Calu3 (cell line): ENCODE measurements at regions of chr17 and their contacts with region 1.

Region 1: GRCh38 chr17:40615295-40615988 is 32.2 kb downstream of the SMARCE1 start:
- DNase-seq: peak; percentile 100
- H3K4me3 Mint-ChIP-seq: no peak overlapping the region
- H3K27ac Mint-ChIP-seq: no peak overlapping the region
- H3K4me1 Mint-ChIP-seq: peaks cover 26% of the 10 kb centered on the region
- H3K27me3 Mint-ChIP-seq: peaks cover 97% of the 10 kb centered on the region
- CTCF ChIP-seq: no peak

Region 2: GRCh38 chr17:40499551-40500174 is 115.8 kb before region 1 on chr17:
- CTCF ChIA-PET with region 1: interaction called, 11 read pairs
- intact Hi-C with region 1: no loop called
- DNase-seq: peak; percentile 100
- H3K4me3 Mint-ChIP-seq: peak overlapping the region; percentile 33
- H3K27ac Mint-ChIP-seq: no peak overlapping the region
- H3K4me1 Mint-ChIP-seq: peaks cover 20% of the 10 kb centered on the region
- H3K27me3 Mint-ChIP-seq: peaks cover 82% of the 10 kb centered on the region
- CTCF ChIP-seq: no peak

Region 3: DNA sequence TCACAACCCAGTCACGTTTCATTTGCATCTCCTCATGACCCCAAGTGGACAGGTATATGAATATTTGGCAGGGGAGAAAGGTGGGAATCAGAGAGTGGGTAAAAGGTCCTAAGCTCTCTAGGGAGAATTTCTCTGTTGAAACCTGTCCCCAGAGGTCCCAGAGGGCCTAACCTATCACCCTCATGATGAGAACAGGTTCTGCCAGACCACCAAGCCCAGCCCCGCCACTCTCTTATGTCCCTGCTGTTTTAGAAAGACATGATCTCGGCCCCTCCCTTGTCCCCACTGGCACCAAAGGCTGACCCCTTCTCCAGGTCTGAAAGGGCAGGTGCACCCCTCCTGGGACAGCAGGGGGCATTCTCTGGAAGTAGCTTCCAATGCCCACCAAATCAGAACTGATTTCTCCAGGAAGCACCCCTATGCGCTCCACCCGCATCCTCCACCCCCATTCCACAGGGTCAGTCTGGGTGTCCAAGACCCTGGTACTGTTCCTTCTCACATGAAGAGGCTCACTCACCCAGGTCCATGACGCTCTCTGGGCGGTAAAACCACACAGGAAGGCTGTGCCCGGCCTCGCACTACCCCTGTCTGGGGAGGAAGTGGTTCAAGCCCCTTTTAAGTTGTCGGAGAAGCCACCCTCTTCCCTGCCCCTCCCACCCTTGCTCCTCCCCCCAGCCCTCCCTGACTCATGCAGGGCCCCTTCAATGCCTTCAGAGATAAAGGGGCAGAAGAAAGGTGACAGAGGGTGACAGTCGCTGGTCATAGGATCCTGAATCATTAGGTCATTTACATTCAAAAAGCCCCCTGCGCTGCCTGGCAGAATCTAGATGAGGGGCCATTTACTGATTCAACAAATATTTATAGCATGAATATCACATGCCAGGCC is 50.3 kb before region 1 on chr17 and contains the start of gene CCR7:
- CTCF ChIA-PET with region 1: interaction called, 50 read pairs
- intact Hi-C with region 1: loop called (anchors 2 kb)
- DNase-seq: peak; percentile 43
- H3K4me3 Mint-ChIP-seq: no peak within 1 kb of the TSS
- H3K27ac Mint-ChIP-seq: no peak within 1 kb of the TSS
- H3K4me1 Mint-ChIP-seq: peaks cover 11% of the 10 kb centered on the region
- H3K27me3 Mint-ChIP-seq: peaks cover 93% of the 10 kb centered on the region
- CTCF ChIP-seq: no peak
- total RNA-seq, gene CCR7: not detected in 2 replicates

Region 4: DNA sequence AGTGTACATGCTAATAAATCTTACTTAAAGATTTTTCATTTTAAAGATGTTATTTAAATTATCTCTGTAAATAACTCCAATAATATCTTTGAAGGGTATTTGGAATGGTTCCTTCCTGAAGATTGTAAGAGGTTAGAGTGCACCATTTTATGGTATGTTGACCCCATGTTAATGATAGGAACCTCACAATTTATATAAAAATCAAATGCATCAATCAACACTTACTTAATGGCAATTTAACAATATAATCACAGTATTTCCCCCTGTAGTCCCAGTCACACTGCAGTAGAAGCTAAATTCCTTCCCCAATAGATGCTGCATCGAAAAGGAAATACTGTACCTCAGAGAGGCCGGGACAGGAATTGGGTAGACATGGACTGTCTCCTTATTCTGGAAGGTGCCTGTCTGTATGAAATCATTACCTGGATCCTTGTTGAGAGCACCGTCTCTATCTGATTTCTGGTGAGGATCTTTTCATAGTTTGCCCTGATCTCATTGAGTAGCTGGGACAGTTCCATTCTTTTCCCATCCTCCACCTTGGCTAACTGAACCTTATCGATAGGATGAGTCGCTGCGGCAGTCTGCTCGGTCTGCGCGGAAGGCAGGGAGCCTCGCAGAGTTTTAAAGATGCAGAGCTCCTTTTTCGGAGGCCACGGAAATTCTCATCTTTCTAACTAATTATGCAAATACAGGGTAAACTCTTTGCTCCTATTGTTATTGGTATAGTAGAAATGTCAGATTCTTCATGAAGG is 49.3 kb after region 1 on chr17 and contains the start of gene KRT222:
- CTCF ChIA-PET with region 1: interaction called, 36 read pairs
- intact Hi-C with region 1: no loop called
- DNase-seq: no peak
- H3K4me3 Mint-ChIP-seq: peak within 1 kb of the TSS; percentile 46
- H3K27ac Mint-ChIP-seq: no peak within 1 kb of the TSS
- H3K4me1 Mint-ChIP-seq: peaks cover 19% of the 10 kb centered on the region
- H3K27me3 Mint-ChIP-seq: peaks cover 86% of the 10 kb centered on the region
- CTCF ChIP-seq: no peak
- total RNA-seq, gene KRT222: not detected in 2 replicates

Region 5: DNA sequence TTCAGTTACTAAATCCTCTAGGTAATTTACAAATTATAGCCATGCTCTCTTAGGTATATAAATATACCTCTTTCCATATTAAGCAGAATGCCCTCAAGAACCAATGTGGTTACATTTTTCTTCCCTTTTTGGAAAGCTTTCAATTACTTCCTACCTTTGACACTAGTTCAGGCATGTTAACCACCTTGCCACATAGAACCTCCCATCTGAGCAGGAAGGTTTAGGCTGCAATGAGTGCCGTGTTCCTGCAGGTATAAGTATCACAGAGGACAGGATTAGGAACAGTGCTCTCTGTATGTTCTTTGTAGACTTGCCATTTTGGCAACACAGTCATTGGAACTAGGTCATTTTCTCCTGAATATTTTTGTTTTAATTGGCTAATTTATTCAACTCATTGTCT is 119.6 kb after region 1 on chr17:
- CTCF ChIA-PET with region 1: interaction called, 23 read pairs
- intact Hi-C with region 1: no loop called
- DNase-seq: no peak
- H3K4me3 Mint-ChIP-seq: no peak overlapping the region
- H3K27ac Mint-ChIP-seq: no peak overlapping the region
- H3K4me1 Mint-ChIP-seq: no peaks in the 10 kb centered on the region
- H3K27me3 Mint-ChIP-seq: peaks cover 88% of the 10 kb centered on the region
- CTCF ChIP-seq: no peak

Region 6: GRCh38 chr17:40818733-40819527 is 203.5 kb after region 1 on chr17:
- CTCF ChIA-PET with region 1: interaction called, 16 read pairs
- intact Hi-C with region 1: no loop called
- DNase-seq: peak; percentile 100
- H3K4me3 Mint-ChIP-seq: peak overlapping the region; percentile 80
- H3K27ac Mint-ChIP-seq: peak overlapping the region; percentile 92
- H3K4me1 Mint-ChIP-seq: peaks cover 31% of the 10 kb centered on the region
- H3K27me3 Mint-ChIP-seq: no peaks in the 10 kb centered on the region
- CTCF ChIP-seq: no peak

Region 7: GRCh38 chr17:40932608-40933007 is 317.2 kb after region 1 on chr17:
- CTCF ChIA-PET with region 1: no interaction called
- intact Hi-C with region 1: no loop called
- DNase-seq: no peak
- H3K4me3 Mint-ChIP-seq: peak overlapping the region; percentile 71
- H3K27ac Mint-ChIP-seq: peak overlapping the region; percentile 96
- H3K4me1 Mint-ChIP-seq: peaks cover 45% of the 10 kb centered on the region
- H3K27me3 Mint-ChIP-seq: no peaks in the 10 kb centered on the region
- CTCF ChIP-seq: no peak